Right cardiac atrium (tissue), 5 donors: ENCODE measurements at regions of chr4 and their contacts with region 1.

Region 1: GRCh38 chr4:26719954-26720552 is 136.2 kb downstream of the TBC1D19 start:
- DNase-seq: no peak
- ATAC-seq: no peak
- H3K4me3 ChIP-seq: no peak overlapping the region
- H3K27ac ChIP-seq: no peak overlapping the region
- H3K4me1 ChIP-seq: peaks cover 2% of the 10 kb centered on the region
- H3K27me3 ChIP-seq: no peaks in the 10 kb centered on the region

Region 2: DNA sequence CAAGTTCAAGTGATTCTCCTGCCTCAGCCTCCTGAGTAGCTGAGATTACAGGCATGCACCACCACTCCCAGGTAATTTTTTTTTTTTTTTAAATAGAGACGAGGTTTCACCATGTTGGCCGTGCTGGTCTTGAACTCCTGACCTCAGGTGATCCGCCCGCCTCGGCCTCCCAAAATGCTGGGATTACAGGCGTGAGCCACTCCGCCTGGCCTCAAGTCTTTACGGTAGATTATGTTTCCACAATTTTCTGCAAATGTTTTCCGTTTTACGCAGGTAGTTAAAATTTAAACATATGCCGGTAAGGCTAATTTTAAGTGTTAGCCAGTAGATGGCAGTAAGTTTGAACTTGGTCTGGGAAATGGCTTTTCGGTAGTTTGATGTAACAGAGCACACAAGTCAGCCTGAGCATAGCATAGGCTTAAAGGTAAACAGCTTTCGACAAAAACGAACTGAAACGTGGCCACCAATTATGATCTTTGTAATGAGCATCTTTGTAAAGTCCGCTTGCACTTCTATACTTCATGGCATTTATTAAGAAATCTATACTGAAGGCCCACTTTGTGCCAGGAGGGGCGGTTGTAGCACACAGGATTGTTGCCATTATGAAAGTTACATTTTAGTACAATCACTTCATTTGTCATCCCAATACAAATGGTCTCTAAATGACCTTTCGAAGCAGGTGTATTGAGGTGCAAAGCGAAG is 260.8 kb before region 1 on chr4:
- intact Hi-C with region 1: loop called in 3 of 4 experiments (anchors 5 to 10 kb)
- DNase-seq: no peak
- ATAC-seq: peak; percentile 59 to 61
- H3K4me3 ChIP-seq: no peak overlapping the region
- H3K27ac ChIP-seq: no peak overlapping the region
- H3K4me1 ChIP-seq: no peaks in the 10 kb centered on the region
- H3K27me3 ChIP-seq: no peaks in the 10 kb centered on the region

Region 3: GRCh38 chr4:26670903-26671537 is 49.0 kb before region 1 on chr4:
- intact Hi-C with region 1: no loop called
- DNase-seq: no peak
- ATAC-seq: no peak
- H3K4me3 ChIP-seq: no peak overlapping the region
- H3K27ac ChIP-seq: no peak overlapping the region
- H3K4me1 ChIP-seq: no peaks in the 10 kb centered on the region
- H3K27me3 ChIP-seq: no peaks in the 10 kb centered on the region